ENCODE measurements at regions of chr1 and their contacts with region 1.

Region 1: DNA sequence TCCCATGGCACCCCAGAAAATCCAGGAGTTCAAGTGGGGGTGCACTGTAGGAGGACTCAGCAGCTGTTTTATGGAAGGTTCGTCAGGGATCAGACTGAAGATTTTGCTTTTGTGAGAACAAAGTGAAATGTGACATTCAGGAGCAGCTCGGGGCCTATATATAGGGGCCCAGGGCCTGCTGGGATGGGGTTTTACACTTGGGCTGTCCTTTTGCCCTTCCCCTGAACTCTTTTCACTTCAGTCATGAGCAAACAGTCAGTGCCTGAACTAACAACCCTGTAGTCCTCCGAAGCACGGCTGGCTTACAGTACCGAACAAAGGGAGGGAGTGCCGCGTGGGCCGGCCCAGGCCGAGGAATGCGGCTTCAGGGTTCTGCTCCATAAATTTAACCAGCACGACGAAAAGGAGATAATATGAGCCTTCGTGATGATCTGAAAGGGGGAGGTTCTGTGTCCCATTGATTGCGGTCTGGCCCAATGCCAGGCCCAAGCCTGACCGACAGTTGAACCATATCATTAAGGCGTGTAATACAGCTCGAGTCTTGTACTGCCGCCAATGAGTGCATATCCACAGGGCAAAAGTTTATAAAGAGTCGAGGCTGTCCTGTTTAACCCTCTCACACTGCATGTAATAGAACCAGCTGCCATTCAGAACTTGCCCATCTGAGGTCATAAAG is 139.9 kb downstream of the DHRS3 start:
- DNase-seq: peak; percentile 96
- ATAC-seq: peak; percentile 81
- H3K4me3 ChIP-seq: peak overlapping the region; percentile 16 to 31; a peak in 3 of 4 replicates
- H3K27ac ChIP-seq: peak overlapping the region; percentile 84
- H3K4me1 ChIP-seq: peaks cover 75 to 95% of the 10 kb centered on the region in 2 experiments
- H3K27me3 ChIP-seq: no peaks in the 10 kb centered on the region
- CTCF ChIP-seq: no peak
- POLR2A ChIP-seq: no peak
- RAD21 ChIP-seq: no peak

Region 2: DNA sequence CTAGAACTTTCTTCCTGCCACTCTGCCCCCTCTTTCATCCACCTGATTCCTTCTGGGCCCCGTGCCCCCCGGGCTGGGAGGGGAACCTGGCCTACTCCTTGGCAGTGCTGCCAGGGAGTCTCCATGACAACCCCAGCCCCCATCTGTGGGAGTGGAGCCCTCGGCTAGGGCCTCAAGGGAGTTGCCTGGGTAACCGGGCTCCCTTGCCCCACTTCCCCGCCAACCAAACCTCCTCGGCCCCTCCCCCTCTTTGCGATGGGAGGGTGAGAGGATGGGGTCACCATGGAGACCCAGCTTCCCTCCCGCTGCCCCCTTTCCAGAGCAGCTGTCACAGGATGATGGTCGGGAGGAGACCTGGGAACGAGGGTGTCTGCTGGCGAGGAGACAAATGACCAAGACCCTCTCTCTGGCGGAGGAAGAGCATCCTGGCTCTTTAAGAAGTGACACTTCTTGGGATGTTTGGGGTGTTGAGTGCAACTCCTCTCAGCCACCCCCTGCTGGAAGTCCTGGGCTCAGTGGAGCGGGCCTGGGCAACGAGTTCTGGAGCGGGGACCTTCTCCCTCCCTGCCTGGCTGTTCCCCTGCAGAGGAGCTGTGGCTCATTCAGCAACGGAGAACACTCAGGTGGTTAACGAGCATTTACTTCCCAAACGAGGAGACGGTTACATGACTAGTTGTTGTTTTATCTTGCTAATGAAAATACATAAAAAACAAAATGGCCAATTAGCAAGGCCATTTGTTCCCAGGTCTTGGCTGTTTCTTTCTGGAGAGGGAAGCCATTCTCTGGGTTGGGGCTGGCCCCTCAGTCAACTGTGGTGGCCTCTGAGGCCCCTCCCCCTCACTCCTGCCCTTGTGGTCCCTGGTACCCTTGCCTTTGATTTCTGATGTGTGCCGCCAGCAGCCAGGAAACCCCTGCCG is 1122.3 kb before region 1 on chr1:
- CTCF ChIA-PET with region 1: no interaction called
- POLR2A ChIA-PET with region 1: no interaction called
- RAD21 ChIA-PET with region 1: no interaction called
- intact Hi-C with region 1: no loop called
- DNase-seq: no peak
- ATAC-seq: no peak
- H3K4me3 ChIP-seq: no peak overlapping the region
- H3K27ac ChIP-seq: no peak overlapping the region
- H3K4me1 ChIP-seq: no peaks in the 10 kb centered on the region
- H3K27me3 ChIP-seq: 0 out of 2 replicates have a peak, but pooled peaks cover 3% of the 10 kb centered on the region
- CTCF ChIP-seq: no peak
- POLR2A ChIP-seq: no peak
- RAD21 ChIP-seq: no peak

Region 3: DNA sequence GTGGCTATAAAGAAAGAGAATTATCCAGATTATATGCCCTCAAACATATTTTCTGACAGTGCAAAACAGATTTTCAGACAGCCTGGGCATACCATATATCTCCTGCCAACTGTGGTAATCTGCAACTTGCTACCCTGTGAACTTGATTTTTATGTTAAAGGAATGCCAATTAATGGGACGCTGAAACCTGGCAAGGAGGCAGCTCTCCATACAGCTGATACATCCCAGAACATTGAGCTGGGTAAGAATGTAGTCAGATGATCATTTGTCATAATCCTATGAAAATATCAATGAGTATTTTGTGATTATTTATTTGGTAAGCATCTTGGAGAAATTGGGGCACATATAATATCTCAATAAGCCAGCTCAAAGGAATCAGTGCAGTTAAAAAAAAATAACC is 124.1 kb before region 1 on chr1:
- CTCF ChIA-PET with region 1: no interaction called
- POLR2A ChIA-PET with region 1: no interaction called
- RAD21 ChIA-PET with region 1: no interaction called
- intact Hi-C with region 1: loop called (anchors 5 kb)
- DNase-seq: no peak
- ATAC-seq: no peak
- H3K4me3 ChIP-seq: no peak overlapping the region
- H3K27ac ChIP-seq: no peak overlapping the region
- H3K4me1 ChIP-seq: no peaks in the 10 kb centered on the region
- H3K27me3 ChIP-seq: no peaks in the 10 kb centered on the region
- CTCF ChIP-seq: no peak
- POLR2A ChIP-seq: no peak
- RAD21 ChIP-seq: no peak

Region 4: GRCh38 chr1:12434174-12434573 is 43.9 kb before region 1 on chr1:
- CTCF ChIA-PET with region 1: no interaction called
- POLR2A ChIA-PET with region 1: interaction called, 5 read pairs
- RAD21 ChIA-PET with region 1: no interaction called
- intact Hi-C with region 1: loop called (anchors 1 kb)
- DNase-seq: peak; percentile 51
- ATAC-seq: peak; percentile 73
- H3K4me3 ChIP-seq: peak overlapping the region in 1 of 2 experiments; percentile 31; a peak in 2 of 4 replicates
- H3K27ac ChIP-seq: peak overlapping the region; percentile 66; the same call in 1 of the 2 replicates
- H3K4me1 ChIP-seq: peaks cover 40 to 58% of the 10 kb centered on the region in 2 experiments
- H3K27me3 ChIP-seq: no peaks in the 10 kb centered on the region
- CTCF ChIP-seq: no peak
- POLR2A ChIP-seq: no peak
- RAD21 ChIP-seq: no peak; the same call in 1 of the 2 replicates

Region 5: GRCh38 chr1:12539705-12540579 is 61.9 kb after region 1 on chr1:
- CTCF ChIA-PET with region 1: no interaction called
- POLR2A ChIA-PET with region 1: interaction called, 7 read pairs
- RAD21 ChIA-PET with region 1: no interaction called
- intact Hi-C with region 1: loop called (anchors 2 kb)
- DNase-seq: peak; percentile 83
- ATAC-seq: peak; percentile 75
- H3K4me3 ChIP-seq: peak overlapping the region; percentile 25 to 48
- H3K27ac ChIP-seq: peak overlapping the region; percentile 24; the same call in 1 of the 2 replicates
- H3K4me1 ChIP-seq: peaks cover 27 to 51% of the 10 kb centered on the region in 2 experiments
- H3K27me3 ChIP-seq: no peaks in the 10 kb centered on the region
- CTCF ChIP-seq: no peak
- POLR2A ChIP-seq: no peak
- RAD21 ChIP-seq: peak; percentile 57

Region 6: GRCh38 chr1:12596007-12596821 is 118.1 kb after region 1 on chr1:
- CTCF ChIA-PET with region 1: no interaction called
- POLR2A ChIA-PET with region 1: interaction called, 6 read pairs
- RAD21 ChIA-PET with region 1: interaction called in 1 of 2 experiments, 3 read pairs
- intact Hi-C with region 1: loop called (anchors 5 kb)
- DNase-seq: no peak
- ATAC-seq: peak; percentile 81
- H3K4me3 ChIP-seq: peak overlapping the region; percentile 32 to 54
- H3K27ac ChIP-seq: peak overlapping the region; percentile 76
- H3K4me1 ChIP-seq: peaks cover 46 to 81% of the 10 kb centered on the region in 2 experiments
- H3K27me3 ChIP-seq: no peaks in the 10 kb centered on the region
- CTCF ChIP-seq: no peak
- POLR2A ChIP-seq: no peak
- RAD21 ChIP-seq: no peak